ENCODE measurements at regions of chr3 and their contacts with region 1.

Region 1: GRCh38 chr3:178690571-178690970 is 154.3 kb downstream of the KCNMB2 start:
- DNase-seq: no peak
- ATAC-seq: peak; percentile 40; the same call in 1 of the 2 replicates
- H3K4me3 ChIP-seq: no peak overlapping the region
- H3K27ac ChIP-seq: no peak overlapping the region
- H3K4me1 ChIP-seq: no peaks in the 10 kb centered on the region
- H3K27me3 ChIP-seq: no peaks in the 10 kb centered on the region
- CTCF ChIP-seq: no peak
- POLR2A ChIP-seq: no peak
- RAD21 ChIP-seq: no peak

Region 2: DNA sequence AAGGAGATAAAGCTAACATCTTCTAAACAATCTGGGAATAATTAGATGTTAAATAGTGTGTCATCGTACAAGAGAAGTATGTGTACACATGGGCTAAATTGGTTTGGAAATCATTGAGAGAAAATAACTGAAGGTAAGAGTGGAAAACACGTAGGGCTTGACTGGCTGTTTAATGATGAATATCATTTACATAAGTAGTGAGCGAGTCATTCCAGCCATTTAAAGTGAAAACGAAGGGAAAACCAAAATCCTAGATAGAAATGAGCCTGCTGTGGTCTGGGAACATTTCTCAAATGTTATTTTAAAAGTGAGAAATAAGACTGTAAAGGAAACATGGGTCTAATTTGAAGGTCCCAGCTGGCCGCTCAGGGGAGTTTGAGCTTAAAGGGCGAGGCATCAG is 196.2 kb before region 1 on chr3:
- CTCF ChIA-PET with region 1: no interaction called
- POLR2A ChIA-PET with region 1: no interaction called
- dilution Hi-C with region 1: no loop called
- in situ Hi-C with region 1: no loop called
- intact Hi-C with region 1: no loop called
- DNase-seq: no peak
- ATAC-seq: no peak
- H3K4me3 ChIP-seq: no peak overlapping the region
- H3K27ac ChIP-seq: no peak overlapping the region
- H3K4me1 ChIP-seq: no peaks in the 10 kb centered on the region
- H3K27me3 ChIP-seq: no peaks in the 10 kb centered on the region
- CTCF ChIP-seq: no peak
- POLR2A ChIP-seq: no peak
- RAD21 ChIP-seq: no peak

Region 3: DNA sequence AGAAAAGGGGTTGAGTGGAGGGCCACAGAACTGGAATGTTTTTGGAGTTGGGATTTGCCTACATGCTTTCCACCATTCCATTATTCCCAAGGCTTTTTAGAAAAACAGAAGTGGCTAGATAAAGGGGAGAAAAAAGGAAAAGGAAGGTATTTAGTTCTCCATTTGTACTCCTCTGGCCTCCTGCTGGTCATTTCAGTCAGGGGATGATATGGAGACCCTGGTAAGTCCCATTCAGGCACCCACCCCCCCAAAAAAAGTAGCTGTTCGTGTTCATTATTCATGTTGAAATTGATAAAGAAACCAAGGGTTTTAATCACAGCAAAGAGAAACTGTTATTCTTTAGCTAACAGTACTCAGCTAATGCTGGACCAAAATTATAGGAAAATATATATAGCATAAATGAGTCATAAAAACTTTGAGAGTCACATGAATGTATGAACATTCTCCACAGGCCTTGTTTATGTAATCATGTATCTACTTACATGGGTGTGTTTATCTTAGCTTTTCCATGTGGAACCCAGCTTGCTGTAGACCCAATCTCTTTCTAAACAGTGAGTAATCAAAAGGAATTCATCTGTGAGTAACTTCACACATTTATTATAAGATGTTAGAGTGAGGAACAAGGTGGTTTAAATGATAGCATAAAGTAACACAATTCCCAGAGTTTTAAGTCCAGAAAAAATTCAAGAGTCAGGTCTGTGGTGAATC is 12.9 kb after region 1 on chr3:
- CTCF ChIA-PET with region 1: interaction called, 4 read pairs
- POLR2A ChIA-PET with region 1: no interaction called
- dilution Hi-C with region 1: no loop called
- in situ Hi-C with region 1: no loop called
- intact Hi-C with region 1: loop called (anchors 1 kb)
- DNase-seq: peak; percentile 97
- ATAC-seq: peak; percentile 83
- H3K4me3 ChIP-seq: 0 out of 2 replicates have a peak overlapping the region, but pooled peaks have one; percentile 18
- H3K27ac ChIP-seq: peak overlapping the region; percentile 98; the same call in 1 of the 2 replicates
- H3K4me1 ChIP-seq: peaks cover 24% of the 10 kb centered on the region
- H3K27me3 ChIP-seq: no peaks in the 10 kb centered on the region
- CTCF ChIP-seq: peak; percentile 24
- POLR2A ChIP-seq: no peak
- RAD21 ChIP-seq: no peak

Region 4: GRCh38 chr3:178915365-178915764 is 224.8 kb after region 1 on chr3:
- CTCF ChIA-PET with region 1: no interaction called
- POLR2A ChIA-PET with region 1: no interaction called
- dilution Hi-C with region 1: no loop called
- in situ Hi-C with region 1: no loop called
- intact Hi-C with region 1: no loop called
- DNase-seq: no peak
- ATAC-seq: no peak
- H3K4me3 ChIP-seq: no peak overlapping the region
- H3K27ac ChIP-seq: no peak overlapping the region
- H3K4me1 ChIP-seq: no peaks in the 10 kb centered on the region
- H3K27me3 ChIP-seq: no peaks in the 10 kb centered on the region
- CTCF ChIP-seq: no peak
- POLR2A ChIP-seq: no peak
- RAD21 ChIP-seq: no peak

Region 5: DNA sequence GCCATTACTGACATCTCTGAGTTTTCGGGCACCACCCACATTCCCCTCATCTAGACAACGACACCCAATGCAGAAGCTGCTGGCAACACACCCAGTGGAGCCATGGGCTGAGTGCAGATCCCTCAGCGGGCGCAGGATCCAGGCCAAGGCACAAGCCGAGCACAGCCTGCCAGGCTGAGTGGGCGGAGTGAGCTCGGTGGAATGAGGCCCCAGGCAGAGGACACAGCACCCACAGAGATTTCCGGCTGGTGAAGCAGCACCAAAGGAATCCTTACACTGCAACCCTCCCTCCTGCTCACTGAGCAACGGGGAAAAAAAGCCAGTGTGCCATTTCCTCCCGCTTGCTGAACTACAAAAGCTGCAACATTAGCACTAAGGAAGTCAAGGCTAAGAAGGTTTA is 346.8 kb after region 1 on chr3:
- CTCF ChIA-PET with region 1: no interaction called
- POLR2A ChIA-PET with region 1: no interaction called
- dilution Hi-C with region 1: no loop called
- in situ Hi-C with region 1: no loop called
- intact Hi-C with region 1: no loop called
- DNase-seq: peak; percentile 70
- ATAC-seq: peak; percentile 79
- H3K4me3 ChIP-seq: no peak overlapping the region
- H3K27ac ChIP-seq: no peak overlapping the region
- H3K4me1 ChIP-seq: peaks cover 14% of the 10 kb centered on the region
- H3K27me3 ChIP-seq: no peaks in the 10 kb centered on the region
- CTCF ChIP-seq: no peak
- POLR2A ChIP-seq: no peak
- RAD21 ChIP-seq: no peak

Measured in IMR-90 (cell line).